HEK293 (cell line): ENCODE measurements at regions of chr1 and their contacts with region 1.

Region 1: GRCh38 chr1:26602378-26602959 is 72.9 kb downstream of the RPS6KA1 start:
- H3K4me3 ChIP-seq: no peak overlapping the region
- H3K27ac ChIP-seq: no peak overlapping the region
- H3K4me1 ChIP-seq: no peaks in the 10 kb centered on the region
- CTCF ChIP-seq: peak; percentile 52; the same call in 1 of the 2 replicates

Region 2: DNA sequence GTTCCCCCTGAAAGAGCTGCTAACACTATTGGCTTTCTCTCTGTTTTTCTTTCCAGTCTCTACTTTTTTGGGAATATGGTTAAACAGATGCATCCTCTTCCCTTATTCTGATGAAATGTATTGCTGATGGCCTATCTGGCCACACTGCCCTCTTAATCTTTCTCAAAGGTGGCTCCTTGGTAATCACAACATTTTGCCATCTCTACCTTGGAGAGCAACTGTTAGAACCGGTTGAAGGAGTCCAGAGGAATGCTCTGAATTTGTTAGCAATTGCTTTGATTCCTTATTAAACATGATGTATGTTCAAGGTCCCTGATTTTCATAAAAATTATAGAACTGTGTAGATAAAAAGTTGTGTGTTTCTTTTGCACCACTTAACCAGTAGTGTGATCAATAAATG is 43.3 kb after region 1 on chr1:
- CTCF ChIA-PET with region 1: no interaction called
- POLR2A ChIA-PET with region 1: no interaction called
- H3K4me3 ChIP-seq: no peak overlapping the region
- H3K27ac ChIP-seq: no peak overlapping the region
- H3K4me1 ChIP-seq: no peaks in the 10 kb centered on the region
- CTCF ChIP-seq: no peak

Region 3: GRCh38 chr1:26677306-26678115 is 75.0 kb after region 1 on chr1:
- CTCF ChIA-PET with region 1: interaction called, 34 read pairs
- POLR2A ChIA-PET with region 1: no interaction called
- H3K4me3 ChIP-seq: no peak overlapping the region
- H3K27ac ChIP-seq: no peak overlapping the region
- H3K4me1 ChIP-seq: no peaks in the 10 kb centered on the region
- CTCF ChIP-seq: peak; percentile 97

Region 4: GRCh38 chr1:26711777-26712176 is 109.3 kb after region 1 on chr1:
- CTCF ChIA-PET with region 1: no interaction called
- POLR2A ChIA-PET with region 1: no interaction called
- H3K4me3 ChIP-seq: no peak overlapping the region
- H3K27ac ChIP-seq: no peak overlapping the region
- H3K4me1 ChIP-seq: peaks cover under 1% of the 10 kb centered on the region; the same call in 1 of the 2 replicates
- CTCF ChIP-seq: no peak

Region 5: GRCh38 chr1:26780344-26780957 is 178.0 kb after region 1 on chr1:
- CTCF ChIA-PET with region 1: interaction called, 17 read pairs
- POLR2A ChIA-PET with region 1: no interaction called
- H3K4me3 ChIP-seq: no peak overlapping the region
- H3K27ac ChIP-seq: no peak overlapping the region
- H3K4me1 ChIP-seq: peaks cover 11% of the 10 kb centered on the region
- CTCF ChIP-seq: no peak

Region 6: GRCh38 chr1:26799479-26800142 is 197.1 kb after region 1 on chr1:
- CTCF ChIA-PET with region 1: interaction called, 17 read pairs
- POLR2A ChIA-PET with region 1: no interaction called
- H3K4me3 ChIP-seq: no peak overlapping the region
- H3K27ac ChIP-seq: no peak overlapping the region
- H3K4me1 ChIP-seq: peaks cover 3% of the 10 kb centered on the region; the same call in 1 of the 2 replicates
- CTCF ChIP-seq: no peak; the same call in 1 of the 2 replicates

Region 7: DNA sequence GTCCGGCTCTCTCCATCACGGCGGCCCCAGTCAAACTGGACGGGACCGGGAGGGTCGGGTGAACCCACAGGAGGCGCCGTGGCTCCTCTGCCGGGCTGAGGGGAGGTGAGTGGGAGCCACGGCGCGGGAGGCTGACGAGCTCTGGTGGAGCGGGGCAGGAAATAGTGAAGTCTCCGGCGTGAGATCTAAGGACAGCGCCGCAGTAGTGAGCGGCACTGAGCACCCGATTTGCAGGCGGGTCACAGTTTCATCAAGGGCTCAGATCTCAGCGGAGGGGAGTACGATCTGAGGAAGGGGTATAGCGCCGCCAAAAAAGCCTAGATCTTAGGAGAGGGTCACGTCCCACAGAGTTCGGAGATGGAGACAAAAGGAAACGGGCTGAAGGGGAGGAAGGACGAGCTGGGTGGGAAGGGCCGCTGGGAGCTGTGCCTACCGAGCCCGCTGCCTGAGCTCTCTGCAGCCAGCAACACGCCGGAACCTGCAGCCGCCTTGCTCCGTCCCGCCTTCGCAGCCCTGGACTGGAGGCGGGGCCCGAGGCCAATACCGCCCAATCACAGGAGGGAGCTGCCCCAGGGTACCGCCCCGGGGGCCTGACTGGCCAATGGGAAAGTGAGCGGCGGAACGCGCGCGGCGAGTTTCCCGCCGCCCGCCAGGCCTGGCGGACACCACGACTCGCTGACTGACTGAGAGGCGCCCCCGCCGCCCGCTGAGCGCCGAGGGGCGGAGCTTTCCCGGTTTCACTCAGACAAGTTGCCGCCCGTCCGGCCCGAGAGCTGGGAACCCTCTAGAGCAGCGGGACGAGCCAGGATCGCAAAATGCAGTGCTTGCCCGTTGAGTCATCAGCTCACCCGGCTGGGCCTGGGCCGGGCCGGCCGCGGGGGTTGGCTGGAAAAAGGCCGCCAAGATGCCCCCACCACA is 262.4 kb after region 1 on chr1:
- CTCF ChIA-PET with region 1: interaction called, 18 read pairs
- POLR2A ChIA-PET with region 1: interaction called, 4 read pairs
- H3K4me3 ChIP-seq: peak overlapping the region; percentile 59
- H3K27ac ChIP-seq: peak overlapping the region; percentile 61
- H3K4me1 ChIP-seq: 0 out of 2 replicates have a peak, but pooled peaks cover 2% of the 10 kb centered on the region
- CTCF ChIP-seq: peak; percentile 76